ENCODE measurements at regions of chr1 and their contacts with region 1.

Region 1: DNA sequence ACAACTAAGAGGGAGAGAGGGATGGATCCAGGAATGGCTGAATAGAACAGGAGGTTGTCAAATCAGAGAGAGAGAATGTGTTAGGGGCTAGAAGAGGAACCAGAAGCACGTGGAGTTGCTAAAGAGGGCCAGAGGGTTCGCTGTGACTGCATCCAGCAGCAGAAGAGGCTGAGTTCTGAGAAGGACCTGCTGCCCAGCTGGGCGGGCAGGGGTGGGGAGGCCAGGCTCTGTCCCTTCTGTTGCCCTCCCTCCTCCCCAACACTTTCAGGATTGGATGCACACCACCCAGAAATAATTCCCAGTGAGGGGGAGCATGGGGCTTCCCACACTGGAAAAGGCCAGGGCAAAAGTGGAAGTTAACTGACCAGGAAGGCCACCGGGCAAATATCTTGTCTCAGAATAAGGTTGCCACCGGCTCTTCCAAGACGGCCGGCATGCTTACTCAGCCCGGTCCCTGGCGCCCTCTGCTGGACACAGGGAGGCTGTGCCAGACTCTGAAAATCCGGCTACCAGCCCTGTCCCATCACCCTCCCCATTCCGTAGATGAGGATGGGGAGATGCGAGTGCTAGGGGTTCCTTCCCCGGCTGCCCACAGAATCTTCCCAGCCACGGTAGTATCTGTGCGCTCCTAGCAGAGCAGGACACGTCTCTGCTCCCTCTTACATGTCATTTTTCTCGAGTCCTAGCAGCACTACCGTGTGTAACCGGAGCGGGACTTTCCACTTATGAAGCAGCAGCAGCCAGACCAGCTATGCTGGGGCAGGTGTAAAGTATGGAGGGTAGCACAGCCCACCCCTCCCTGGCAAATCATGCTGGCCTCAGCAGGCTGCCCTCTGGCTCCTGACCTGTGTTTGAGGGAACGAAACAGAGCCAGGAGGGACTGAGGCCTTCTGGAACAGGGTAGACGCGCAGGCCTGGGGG is 46.8 kb upstream of the A3GALT2 start:
- DNase-seq: peak; percentile 75
- ATAC-seq: peak; percentile 73
- H3K4me3 ChIP-seq: no peak overlapping the region
- H3K27ac ChIP-seq: no peak overlapping the region
- H3K4me1 ChIP-seq: peaks cover 32% of the 10 kb centered on the region
- H3K27me3 ChIP-seq: no peaks in the 10 kb centered on the region
- CTCF ChIP-seq: peak; percentile 97
- POLR2A ChIP-seq: no peak
- RAD21 ChIP-seq: peak; percentile 99

Region 2: DNA sequence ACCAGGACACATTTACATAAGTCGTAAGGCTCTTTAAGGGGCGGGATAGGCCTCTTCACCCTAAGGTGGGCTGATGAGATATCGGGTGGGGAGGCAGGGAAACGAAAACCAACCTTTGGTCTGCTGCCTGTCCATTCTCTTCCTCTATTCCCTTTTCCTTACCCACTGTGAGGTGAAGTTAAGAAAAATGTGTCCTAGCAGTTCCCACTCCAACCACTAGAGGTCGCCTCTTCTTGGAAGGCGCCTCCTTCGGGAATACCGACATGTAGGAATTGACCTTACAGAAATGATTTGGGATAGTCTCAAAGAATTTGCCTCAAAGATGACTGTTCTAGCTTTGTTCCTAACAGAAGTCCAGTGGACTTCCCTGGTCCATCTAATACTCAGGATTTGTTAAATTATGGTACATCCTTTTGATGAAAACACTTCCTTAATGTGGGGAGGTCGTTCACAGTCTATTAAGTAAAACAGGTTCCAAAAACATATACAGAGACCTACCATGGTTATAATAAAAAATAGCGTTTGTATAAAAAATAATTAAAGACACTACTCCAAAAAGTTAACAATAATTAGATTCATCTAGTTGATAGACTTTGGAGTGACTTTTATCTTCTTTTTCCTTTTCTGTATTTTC is 272.7 kb before region 1 on chr1:
- CTCF ChIA-PET with region 1: no interaction called
- POLR2A ChIA-PET with region 1: no interaction called
- dilution Hi-C with region 1: no loop called
- in situ Hi-C with region 1: no loop called
- intact Hi-C with region 1: loop called (anchors 10 kb)
- DNase-seq: peak; percentile 71
- ATAC-seq: no peak
- H3K4me3 ChIP-seq: no peak overlapping the region
- H3K27ac ChIP-seq: peak overlapping the region; percentile 43; the same call in 1 of the 2 replicates
- H3K4me1 ChIP-seq: peaks cover 35% of the 10 kb centered on the region
- H3K27me3 ChIP-seq: no peaks in the 10 kb centered on the region
- CTCF ChIP-seq: peak; percentile 93
- POLR2A ChIP-seq: no peak
- RAD21 ChIP-seq: peak; percentile 71

Region 3: GRCh38 chr1:33219881-33220661 is 147.7 kb before region 1 on chr1:
- CTCF ChIA-PET with region 1: no interaction called
- POLR2A ChIA-PET with region 1: no interaction called
- dilution Hi-C with region 1: no loop called
- in situ Hi-C with region 1: no loop called
- intact Hi-C with region 1: loop called (anchors 2 kb)
- DNase-seq: peak; percentile 45
- ATAC-seq: peak; percentile 56; the same call in 1 of the 2 replicates
- H3K4me3 ChIP-seq: no peak overlapping the region
- H3K27ac ChIP-seq: no peak overlapping the region
- H3K4me1 ChIP-seq: peaks cover 10% of the 10 kb centered on the region
- H3K27me3 ChIP-seq: peaks cover 4% of the 10 kb centered on the region; the same call in 1 of the 2 replicates
- CTCF ChIP-seq: no peak
- POLR2A ChIP-seq: no peak
- RAD21 ChIP-seq: no peak

Region 4: DNA sequence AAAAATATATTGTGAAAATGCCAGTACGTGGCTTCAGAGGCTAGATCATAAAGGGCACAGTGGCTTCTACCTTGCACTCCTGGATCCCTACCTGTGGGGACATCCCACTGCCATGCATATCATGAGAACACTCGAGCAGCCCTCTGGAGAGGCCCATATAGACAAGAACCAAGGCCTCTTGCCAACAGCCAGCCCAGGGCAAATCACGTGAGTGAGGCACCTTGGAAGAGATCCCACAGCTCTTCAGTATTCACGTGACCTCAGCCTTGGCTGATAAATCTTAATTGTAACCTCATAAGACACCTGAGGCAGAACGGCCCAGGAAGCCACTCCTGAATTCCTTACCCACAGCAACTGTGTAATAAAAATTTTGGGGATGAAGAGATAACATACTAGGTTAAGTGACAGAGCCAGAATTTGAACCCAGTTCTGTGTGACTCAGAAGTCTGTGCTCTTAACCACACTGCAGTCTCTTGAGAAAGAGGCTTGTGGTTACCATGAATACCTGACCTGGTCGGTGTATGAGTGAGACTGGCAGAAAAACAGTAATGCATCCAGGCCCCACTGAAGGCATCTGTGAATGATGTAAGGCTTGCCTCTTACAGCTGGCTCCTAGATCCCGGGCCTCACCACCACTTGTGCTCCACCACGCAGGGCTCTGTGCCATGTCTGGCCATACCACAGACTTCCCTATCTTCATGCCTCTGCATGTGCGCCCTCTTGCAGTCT is 40.0 kb before region 1 on chr1:
- CTCF ChIA-PET with region 1: no interaction called
- POLR2A ChIA-PET with region 1: interaction called, 3 read pairs
- dilution Hi-C with region 1: no loop called
- in situ Hi-C with region 1: no loop called
- intact Hi-C with region 1: loop called (anchors 5 kb)
- DNase-seq: peak; percentile 99
- ATAC-seq: peak; percentile 81
- H3K4me3 ChIP-seq: no peak overlapping the region
- H3K27ac ChIP-seq: peak overlapping the region; percentile 13; the same call in 1 of the 2 replicates
- H3K4me1 ChIP-seq: peaks cover 28% of the 10 kb centered on the region
- H3K27me3 ChIP-seq: no peaks in the 10 kb centered on the region
- CTCF ChIP-seq: no peak
- POLR2A ChIP-seq: no peak
- RAD21 ChIP-seq: peak; percentile 27; the same call in 1 of the 2 replicates

Region 5: GRCh38 chr1:33610864-33611455 is 243.2 kb after region 1 on chr1:
- CTCF ChIA-PET with region 1: no interaction called
- POLR2A ChIA-PET with region 1: no interaction called
- dilution Hi-C with region 1: no loop called
- in situ Hi-C with region 1: no loop called
- intact Hi-C with region 1: loop called (anchors 5 kb)
- DNase-seq: no peak
- ATAC-seq: no peak
- H3K4me3 ChIP-seq: no peak overlapping the region
- H3K27ac ChIP-seq: no peak overlapping the region
- H3K4me1 ChIP-seq: no peaks in the 10 kb centered on the region
- H3K27me3 ChIP-seq: peaks cover 4% of the 10 kb centered on the region
- CTCF ChIP-seq: no peak
- POLR2A ChIP-seq: no peak
- RAD21 ChIP-seq: no peak

Measured in IMR-90 (cell line).